HEK293 (cell line): ENCODE measurements at regions of chr6 and their contacts with region 1.

Region 1: DNA sequence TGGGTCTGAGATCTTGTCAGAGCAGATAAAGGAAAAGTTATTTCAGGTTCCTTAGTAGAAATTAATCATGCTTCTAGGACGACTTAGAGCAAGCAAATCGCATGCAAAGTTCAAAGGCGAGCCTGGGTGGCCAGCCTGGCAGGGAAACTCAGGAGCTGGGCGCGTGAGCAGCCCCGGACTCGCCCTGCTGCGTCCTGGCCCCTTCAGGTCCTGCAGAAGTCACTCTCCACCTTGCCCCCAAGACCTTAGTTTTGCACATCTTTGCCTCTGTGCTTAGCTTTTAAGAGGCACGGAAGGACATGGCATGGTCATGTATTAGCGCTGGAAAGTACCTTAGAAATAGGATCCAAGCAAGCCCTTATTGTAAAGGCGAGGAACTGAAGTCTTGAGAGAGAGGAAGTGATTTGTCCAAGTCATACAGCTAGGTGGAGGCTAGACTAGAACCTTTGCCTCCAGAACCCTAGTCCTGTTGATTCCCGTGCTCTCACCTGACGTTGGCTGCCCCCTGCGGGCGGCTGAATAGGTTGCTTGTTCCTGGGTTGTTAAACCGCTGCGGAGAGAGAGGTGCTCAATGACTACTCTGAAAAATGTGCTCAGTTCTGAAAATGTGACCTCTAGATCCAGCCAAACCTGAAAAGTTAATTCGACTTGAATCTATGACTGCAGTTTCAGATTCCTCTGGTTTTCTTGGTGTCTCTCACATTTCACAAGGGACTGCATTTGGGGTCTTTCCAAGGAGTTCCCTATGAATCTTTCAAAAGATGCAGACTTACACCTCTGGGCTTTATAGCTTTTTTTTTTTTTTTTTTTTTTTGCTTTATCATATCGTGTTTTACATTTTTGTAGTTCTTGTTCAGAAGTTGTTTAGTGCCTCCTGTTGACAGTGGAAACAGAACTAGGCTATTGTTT is 2.7 kb downstream of the MYB start:
- H3K4me3 ChIP-seq: peak overlapping the region; percentile 61
- H3K27ac ChIP-seq: no peak overlapping the region
- H3K4me1 ChIP-seq: peaks cover 3% of the 10 kb centered on the region
- CTCF ChIP-seq: peak; percentile 30

Region 2: DNA sequence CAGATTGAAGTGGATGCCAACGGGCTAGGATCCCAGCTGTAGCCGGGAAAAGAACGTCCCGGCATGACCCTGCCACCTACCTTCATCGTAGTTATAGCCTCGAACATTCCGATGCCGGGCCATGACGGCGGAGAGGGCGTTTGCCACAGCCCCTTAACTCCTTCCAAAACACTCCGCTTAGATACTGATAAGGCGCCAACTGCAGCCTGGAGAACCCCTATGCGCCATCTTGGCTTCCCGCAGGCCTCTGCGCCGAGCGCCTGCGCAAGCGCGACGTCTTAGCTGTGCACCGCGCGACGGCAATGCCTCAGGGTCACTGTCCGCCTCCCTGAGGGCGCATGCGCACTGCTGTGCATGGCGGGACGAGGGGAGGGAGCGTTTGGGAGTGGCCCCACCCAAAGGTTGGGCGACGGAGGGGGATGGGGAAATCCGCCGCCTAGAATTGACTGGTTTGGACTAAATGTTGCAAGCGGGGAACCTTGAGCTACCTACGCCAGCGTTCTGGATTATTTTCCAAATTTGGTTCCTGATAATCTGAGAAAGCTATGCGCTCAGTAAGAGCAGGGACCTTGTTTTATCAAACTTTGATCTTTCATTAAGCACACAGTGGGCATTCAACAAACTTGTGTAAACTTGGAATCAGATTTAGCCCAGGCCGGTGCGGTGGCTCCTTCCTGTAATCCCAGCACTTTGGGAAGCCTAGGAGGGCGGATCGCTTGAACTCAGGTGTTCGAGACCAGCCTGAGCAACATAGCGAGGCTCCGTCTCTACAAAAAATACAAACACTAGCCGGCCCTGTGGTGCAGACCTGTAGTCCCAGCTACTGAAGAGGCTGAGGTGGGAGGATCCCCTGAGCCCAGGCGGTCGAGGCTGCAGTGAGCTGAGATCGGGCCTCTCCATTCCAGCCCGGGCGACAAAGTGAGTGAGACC is 129.0 kb before region 1 on chr6 and contains the start of gene HBS1L:
- CTCF ChIA-PET with region 1: no interaction called
- POLR2A ChIA-PET with region 1: interaction called, 13 read pairs
- H3K4me3 ChIP-seq: peak within 1 kb of the TSS; percentile 91
- H3K27ac ChIP-seq: peak within 1 kb of the TSS; percentile 66
- H3K4me1 ChIP-seq: peaks cover 5% of the 10 kb centered on the region; the same call in 1 of the 2 replicates
- CTCF ChIP-seq: no peak; the same call in 1 of the 2 replicates

Region 3: DNA sequence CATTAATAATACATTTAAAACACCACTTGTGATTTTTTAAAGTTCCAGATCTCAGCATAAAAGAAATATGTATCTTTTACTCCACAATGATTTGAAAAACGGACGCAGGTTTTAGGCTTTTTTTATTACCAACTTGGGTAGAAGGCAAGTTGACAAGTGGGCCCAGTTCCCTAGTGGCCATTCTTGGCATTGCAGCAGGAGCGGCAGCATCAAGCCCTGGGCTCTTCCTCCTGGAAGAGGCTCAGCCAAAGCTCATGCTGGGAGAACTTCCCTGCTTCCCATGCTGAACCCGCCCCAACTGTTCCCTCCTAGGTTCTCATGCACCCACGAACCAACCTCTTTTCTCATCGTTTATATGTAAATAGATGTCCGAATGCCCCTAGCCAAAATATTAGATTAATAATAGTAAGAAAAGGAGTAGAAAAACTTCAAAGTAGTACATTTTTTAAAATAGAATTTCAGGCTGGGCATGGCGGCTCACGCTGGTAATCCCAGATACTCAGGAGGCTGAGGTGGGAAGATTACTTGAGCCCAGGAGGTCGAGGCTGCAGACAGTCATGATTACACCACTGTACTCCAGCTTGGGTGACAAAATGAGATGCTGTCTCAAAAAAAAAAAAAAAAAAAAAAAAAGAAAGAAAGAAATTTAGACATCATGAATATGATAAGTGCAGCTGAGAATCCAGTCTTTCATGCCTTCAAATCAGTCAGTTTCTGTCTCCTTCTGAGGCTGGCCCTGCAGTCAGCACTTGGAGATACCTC is 20.9 kb before region 1 on chr6:
- CTCF ChIA-PET with region 1: interaction called, 14 read pairs
- POLR2A ChIA-PET with region 1: interaction called, 3 read pairs
- H3K4me3 ChIP-seq: no peak overlapping the region
- H3K27ac ChIP-seq: no peak overlapping the region
- H3K4me1 ChIP-seq: no peaks in the 10 kb centered on the region
- CTCF ChIP-seq: 0 out of 2 replicates have a peak, but pooled peaks have one; percentile 16

Region 4: DNA sequence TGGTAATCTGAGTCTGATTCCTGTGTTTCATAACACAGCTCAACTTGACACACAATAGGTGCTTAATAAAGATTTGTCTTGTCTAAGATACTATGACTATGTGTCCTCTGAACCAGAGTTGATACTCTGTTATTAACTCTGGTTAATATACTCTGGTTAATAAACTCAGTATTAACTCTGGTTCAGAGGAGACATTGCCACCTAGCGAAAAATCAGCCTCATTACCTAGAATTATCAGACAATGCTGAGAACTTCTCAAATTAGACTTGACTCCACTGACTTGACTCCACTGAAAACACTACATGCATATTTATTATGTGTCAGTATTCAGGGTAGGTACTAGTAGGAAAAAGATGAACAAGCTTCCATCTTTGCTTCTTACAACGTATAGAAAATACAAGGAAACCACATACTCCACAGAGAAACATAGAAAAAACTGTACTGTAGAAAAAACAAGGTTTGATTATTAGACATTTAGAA is 239.9 kb after region 1 on chr6:
- CTCF ChIA-PET with region 1: interaction called, 11 read pairs
- POLR2A ChIA-PET with region 1: no interaction called
- H3K4me3 ChIP-seq: no peak overlapping the region
- H3K27ac ChIP-seq: no peak overlapping the region
- H3K4me1 ChIP-seq: no peaks in the 10 kb centered on the region
- CTCF ChIP-seq: no peak